ENCODE measurements at regions of chr12 and their contacts with region 1.

Region 1: DNA sequence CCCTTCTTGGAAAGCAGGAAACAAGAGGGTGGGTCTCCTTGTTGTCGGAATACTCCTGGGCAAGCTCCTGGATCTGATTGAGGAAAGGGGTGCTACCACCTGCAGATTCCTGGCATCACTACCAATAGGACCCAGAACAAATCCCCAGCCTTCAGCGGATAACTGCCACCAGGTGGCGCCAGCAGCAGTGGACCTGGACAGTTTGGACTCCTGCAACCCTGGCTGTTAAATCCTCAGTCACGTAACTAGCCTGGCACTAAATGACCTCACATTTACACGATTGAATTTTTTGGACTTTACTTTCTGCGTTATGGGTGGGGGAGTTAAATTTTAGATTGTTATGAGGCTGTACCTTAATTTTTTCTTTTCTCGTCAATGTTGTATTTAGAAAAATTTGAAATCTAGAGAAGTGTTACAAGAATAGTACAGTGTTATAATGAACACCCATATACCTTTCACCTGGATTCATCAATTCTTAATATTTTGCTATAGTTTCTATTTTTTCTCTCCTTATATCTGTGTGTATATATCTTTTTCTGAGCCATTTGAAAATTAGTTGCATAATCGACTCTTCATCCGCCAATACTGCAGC is 95.6 kb downstream of the GAS2L3 start:
- DNase-seq: peak; percentile 36
- ATAC-seq: peak; percentile 96
- H3K4me3 ChIP-seq: no peak overlapping the region
- H3K27ac ChIP-seq: no peak overlapping the region
- H3K4me1 ChIP-seq: no peaks in the 10 kb centered on the region
- H3K27me3 ChIP-seq: no peaks in the 10 kb centered on the region; the same call in 1 of the 2 replicates
- CTCF ChIP-seq: peak; percentile 96

Region 2: DNA sequence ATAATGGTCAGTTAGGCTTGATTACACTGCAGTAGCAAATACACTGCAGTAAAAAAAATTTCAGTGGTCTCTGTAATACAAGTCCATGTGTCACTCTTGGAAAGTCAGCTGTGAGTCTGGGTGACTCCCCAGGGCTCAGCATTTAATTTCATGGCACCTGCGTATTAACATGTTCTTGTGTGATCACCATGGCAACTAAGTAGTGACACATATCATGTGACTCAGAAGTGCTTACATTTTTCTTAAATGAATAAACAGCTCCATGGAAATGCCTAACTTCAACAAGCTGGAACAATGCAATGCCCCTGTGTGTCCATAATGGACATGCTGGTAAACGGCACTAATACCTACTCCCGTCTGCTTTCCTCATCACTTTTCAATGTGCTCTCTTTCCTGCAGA is 37.0 kb after region 1 on chr12:
- CTCF ChIA-PET with region 1: no interaction called
- POLR2A ChIA-PET with region 1: no interaction called
- in situ Hi-C with region 1: no loop called
- intact Hi-C with region 1: no loop called
- DNase-seq: no peak
- ATAC-seq: no peak
- H3K4me3 ChIP-seq: no peak overlapping the region
- H3K27ac ChIP-seq: no peak overlapping the region
- H3K4me1 ChIP-seq: no peaks in the 10 kb centered on the region
- H3K27me3 ChIP-seq: peaks cover 4% of the 10 kb centered on the region; the same call in 1 of the 2 replicates
- CTCF ChIP-seq: no peak

Region 3: GRCh38 chr12:100733817-100734593 is 65.0 kb after region 1 on chr12:
- CTCF ChIA-PET with region 1: no interaction called
- POLR2A ChIA-PET with region 1: no interaction called
- in situ Hi-C with region 1: no loop called
- intact Hi-C with region 1: loop called (anchors 2 kb)
- DNase-seq: no peak
- ATAC-seq: peak; percentile 66; the same call in 1 of the 2 replicates
- H3K4me3 ChIP-seq: no peak overlapping the region
- H3K27ac ChIP-seq: no peak overlapping the region
- H3K4me1 ChIP-seq: no peaks in the 10 kb centered on the region
- H3K27me3 ChIP-seq: peaks cover 6% of the 10 kb centered on the region; the same call in 1 of the 2 replicates
- CTCF ChIP-seq: peak; percentile 75